Activated B cell treated with CpG ODN at 0.5 μM for 24 hours (primary cell): ENCODE measurements at regions of chr21 and their contacts with region 1.

Region 1: DNA sequence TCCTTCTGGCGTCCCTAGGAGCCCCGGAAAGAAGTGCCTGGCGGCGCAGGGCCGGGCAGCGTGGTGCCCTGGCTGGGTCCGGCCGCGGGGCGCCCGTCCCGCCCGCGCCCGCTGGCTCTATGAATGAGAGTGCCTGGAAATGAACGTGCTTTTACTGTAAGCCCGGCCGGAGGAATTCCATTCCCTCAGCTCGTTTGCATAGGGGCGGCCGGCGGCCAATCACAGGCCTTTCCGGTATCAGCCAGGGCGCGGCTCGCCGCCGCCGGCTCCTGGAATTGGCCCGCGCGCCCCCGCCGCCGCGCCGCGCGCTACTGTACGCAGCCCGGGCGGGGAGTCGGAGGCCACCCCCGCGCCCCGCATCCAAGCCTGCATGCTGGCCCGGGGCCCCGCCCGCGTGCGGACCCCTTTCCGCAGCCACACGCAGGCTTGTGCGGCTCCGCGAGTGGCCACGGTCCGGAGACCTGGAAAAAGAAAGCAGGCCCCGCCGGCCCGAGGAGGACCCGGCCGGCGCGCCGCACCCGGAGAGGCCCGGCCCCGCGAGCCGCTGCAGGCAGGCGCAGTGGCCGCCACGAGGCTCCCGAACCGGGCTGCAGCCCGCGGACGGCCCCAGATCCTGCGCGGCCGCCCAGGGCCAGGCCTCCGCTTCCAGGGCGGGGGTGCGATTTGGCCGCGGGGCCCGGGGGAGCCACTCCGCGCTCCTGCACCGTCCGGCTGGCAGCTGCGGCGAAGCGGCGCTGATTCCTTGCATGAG is 160.4 kb downstream of the RUNX1 start:
- DNase-seq: peak; percentile 82
- ATAC-seq: peak; percentile 45
- H3K4me3 Mint-ChIP-seq: peak overlapping the region; percentile 91
- H3K27ac Mint-ChIP-seq: peak overlapping the region; percentile 99
- H3K4me1 Mint-ChIP-seq: peaks cover 53% of the 10 kb centered on the region
- H3K27me3 Mint-ChIP-seq: peaks cover 1% of the 10 kb centered on the region
- CTCF ChIP-seq: no peak

Region 2: DNA sequence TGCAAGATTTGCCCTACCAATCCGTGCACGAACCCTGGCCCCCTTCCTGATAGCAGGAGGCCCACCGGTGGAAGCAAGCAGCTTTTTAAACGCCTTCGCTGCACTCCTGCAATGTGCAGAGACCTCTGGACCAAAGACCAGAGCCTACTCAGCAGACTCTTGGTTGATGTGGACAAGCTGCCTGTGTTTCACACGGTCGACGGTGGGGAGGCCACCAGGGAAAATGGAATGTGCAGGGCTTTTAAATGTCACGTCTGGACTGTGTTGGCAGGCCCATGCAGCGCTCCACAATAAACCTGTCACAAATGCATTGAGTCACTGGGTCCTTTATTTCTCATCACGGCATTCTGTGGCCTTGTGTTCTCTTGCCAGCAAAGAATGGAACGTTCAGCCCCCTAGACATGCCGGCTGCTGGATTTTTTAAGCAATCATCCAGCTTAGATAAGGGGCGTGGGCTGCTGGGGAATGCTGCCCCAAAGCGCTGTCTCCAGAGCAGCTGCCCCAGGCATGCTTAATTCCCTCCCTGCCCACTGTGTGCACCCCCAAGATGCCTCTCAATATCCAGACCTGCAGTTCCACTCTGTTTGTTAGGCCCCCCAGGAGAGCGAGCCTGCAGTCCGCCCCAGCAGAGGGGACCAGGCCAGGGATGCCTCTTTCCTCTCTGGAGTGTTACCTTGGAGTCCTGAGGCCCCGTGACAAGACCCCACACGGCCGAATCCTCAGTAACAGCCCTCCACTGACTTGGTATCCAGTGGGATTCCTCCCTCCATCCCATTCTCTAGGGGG is 1044.4 kb before region 1 on chr21:
- CTCF ChIA-PET with region 1: no interaction called
- POLR2A ChIA-PET with region 1: no interaction called
- intact Hi-C with region 1: no loop called
- DNase-seq: no peak
- ATAC-seq: no peak
- H3K4me3 Mint-ChIP-seq: no peak overlapping the region
- H3K27ac Mint-ChIP-seq: no peak overlapping the region
- H3K4me1 Mint-ChIP-seq: peaks cover 8% of the 10 kb centered on the region
- H3K27me3 Mint-ChIP-seq: peaks cover 3% of the 10 kb centered on the region
- CTCF ChIP-seq: no peak

Region 3: DNA sequence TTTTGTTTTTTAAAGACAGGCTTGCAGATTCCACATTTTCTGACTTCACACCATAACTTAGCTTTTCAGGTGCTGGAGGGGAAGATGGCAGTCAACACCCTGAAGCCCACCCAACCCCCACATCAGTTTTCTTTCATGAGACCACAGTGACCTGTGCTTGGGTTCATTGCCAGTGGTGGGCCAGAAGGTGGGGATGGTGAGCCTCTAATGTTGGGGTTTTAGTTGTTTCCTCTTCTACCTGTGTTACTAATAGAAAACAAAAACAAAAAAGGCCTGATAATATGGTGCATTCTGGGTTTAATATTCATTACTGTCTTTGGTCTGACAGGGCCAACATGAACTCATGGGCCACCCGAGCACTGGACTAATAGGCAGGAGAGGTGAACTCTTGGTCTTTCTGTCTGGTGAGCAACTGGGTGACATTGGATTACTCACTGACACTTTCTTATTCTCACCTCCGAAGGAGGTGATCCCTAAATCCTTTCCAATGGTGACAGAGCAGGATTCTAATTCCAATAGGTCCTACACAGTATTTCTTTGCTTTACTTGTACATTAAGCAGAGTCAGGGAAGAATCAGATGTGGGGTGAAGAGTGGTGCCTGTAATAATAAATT is 87.1 kb before region 1 on chr21:
- CTCF ChIA-PET with region 1: interaction called, 7 read pairs
- POLR2A ChIA-PET with region 1: interaction called, 26 read pairs
- intact Hi-C with region 1: loop called (anchors 1 kb)
- DNase-seq: no peak
- ATAC-seq: peak; percentile 83
- H3K4me3 Mint-ChIP-seq: no peak overlapping the region
- H3K27ac Mint-ChIP-seq: no peak overlapping the region
- H3K4me1 Mint-ChIP-seq: peaks cover 25% of the 10 kb centered on the region
- H3K27me3 Mint-ChIP-seq: no peaks in the 10 kb centered on the region
- CTCF ChIP-seq: no peak

Region 4: GRCh38 chr21:34874684-34875513 is 13.8 kb before region 1 on chr21:
- CTCF ChIA-PET with region 1: interaction called, 4 read pairs
- POLR2A ChIA-PET with region 1: interaction called, 58 read pairs
- intact Hi-C with region 1: no loop called
- DNase-seq: no peak
- ATAC-seq: peak; percentile 90
- H3K4me3 Mint-ChIP-seq: peak overlapping the region; percentile 79
- H3K27ac Mint-ChIP-seq: peak overlapping the region; percentile 91
- H3K4me1 Mint-ChIP-seq: peaks cover 32% of the 10 kb centered on the region
- H3K27me3 Mint-ChIP-seq: no peaks in the 10 kb centered on the region
- CTCF ChIP-seq: no peak

Region 5: GRCh38 chr21:35026617-35027562 is 138.1 kb after region 1 on chr21:
- CTCF ChIA-PET with region 1: interaction called, 5 read pairs
- POLR2A ChIA-PET with region 1: interaction called, 34 read pairs
- intact Hi-C with region 1: loop called (anchors 1 kb)
- DNase-seq: peak; percentile 73
- ATAC-seq: peak; percentile 90
- H3K4me3 Mint-ChIP-seq: peak overlapping the region; percentile 87
- H3K27ac Mint-ChIP-seq: peak overlapping the region; percentile 98
- H3K4me1 Mint-ChIP-seq: peaks cover 65% of the 10 kb centered on the region
- H3K27me3 Mint-ChIP-seq: no peaks in the 10 kb centered on the region
- CTCF ChIP-seq: no peak

Region 6: GRCh38 chr21:35226948-35227744 is 338.4 kb after region 1 on chr21:
- CTCF ChIA-PET with region 1: interaction called, 3 read pairs
- POLR2A ChIA-PET with region 1: interaction called, 36 read pairs
- intact Hi-C with region 1: loop called (anchors 1 kb)
- DNase-seq: no peak
- ATAC-seq: peak; percentile 86
- H3K4me3 Mint-ChIP-seq: peak overlapping the region; percentile 68
- H3K27ac Mint-ChIP-seq: peak overlapping the region; percentile 87
- H3K4me1 Mint-ChIP-seq: peaks cover 44% of the 10 kb centered on the region
- H3K27me3 Mint-ChIP-seq: peaks cover under 1% of the 10 kb centered on the region
- CTCF ChIP-seq: no peak

Region 7: DNA sequence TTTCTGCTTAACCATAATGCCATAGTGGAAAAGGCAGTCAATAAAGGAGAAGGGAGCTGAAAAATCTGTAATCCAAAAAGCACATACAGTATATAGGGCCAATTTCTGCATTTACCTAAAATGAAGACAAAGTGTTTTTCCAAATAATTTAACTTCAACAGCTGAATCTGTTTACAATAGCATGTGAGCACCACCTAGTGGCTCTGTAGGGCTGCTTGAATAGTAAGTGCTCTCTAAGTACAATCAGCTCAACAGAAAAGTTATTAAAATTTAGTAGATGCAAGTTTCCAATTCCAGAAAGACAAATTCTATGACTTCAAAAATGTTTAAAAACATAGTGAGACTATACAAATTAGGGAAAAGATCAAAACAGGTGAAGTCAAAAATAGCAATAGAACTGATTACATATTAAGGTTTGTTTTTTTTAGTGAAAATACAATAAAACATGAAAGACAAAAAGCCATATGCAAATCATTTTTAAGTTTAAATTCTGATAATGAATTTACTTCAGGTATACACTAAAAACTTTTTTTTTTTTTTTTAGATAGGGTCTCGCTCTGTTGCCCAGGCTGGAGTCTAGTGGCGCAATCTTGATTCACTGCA is 951.6 kb after region 1 on chr21:
- CTCF ChIA-PET with region 1: interaction called, 12 read pairs
- POLR2A ChIA-PET with region 1: interaction called, 7 read pairs
- intact Hi-C with region 1: loop called (anchors 1 kb)
- DNase-seq: no peak
- ATAC-seq: no peak
- H3K4me3 Mint-ChIP-seq: no peak overlapping the region
- H3K27ac Mint-ChIP-seq: no peak overlapping the region
- H3K4me1 Mint-ChIP-seq: no peaks in the 10 kb centered on the region
- H3K27me3 Mint-ChIP-seq: peaks cover 6% of the 10 kb centered on the region
- CTCF ChIP-seq: peak; percentile 70